Panc1 (cell line): ENCODE measurements at regions of chr4 and their contacts with region 1.

Region 1: DNA sequence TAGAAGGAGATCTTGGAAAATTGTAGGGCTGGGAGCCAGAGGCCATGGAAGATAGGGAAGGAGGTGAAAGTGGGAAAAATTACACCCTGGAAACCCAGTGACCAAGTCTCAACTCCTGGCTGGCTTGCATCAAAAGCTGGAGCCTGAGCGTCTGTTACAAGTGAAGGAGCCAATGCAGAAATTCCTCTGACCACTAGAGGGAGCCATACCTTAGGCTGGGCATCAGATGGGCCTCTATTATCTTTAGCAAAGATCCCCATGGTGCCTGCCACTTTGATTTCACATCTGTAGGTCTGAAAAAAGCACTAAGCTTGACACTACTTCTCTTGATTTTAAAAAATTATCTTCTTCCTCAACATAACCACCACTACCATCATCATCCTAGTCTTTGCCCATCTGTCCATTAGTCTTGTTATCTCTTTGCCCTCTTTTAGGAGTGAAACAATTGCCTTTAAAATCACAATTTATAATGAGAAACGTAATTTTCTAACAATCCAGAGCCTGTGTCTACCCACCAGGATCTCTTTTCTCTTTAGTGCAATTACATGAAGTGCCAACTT is 62.9 kb downstream of the ANAPC4 start:
- DNase-seq: peak; percentile 45
- ATAC-seq: peak; percentile 83
- H3K4me3 ChIP-seq: no peak overlapping the region
- H3K27ac ChIP-seq: no peak overlapping the region
- H3K4me1 ChIP-seq: no peaks in the 10 kb centered on the region
- H3K27me3 ChIP-seq: no peaks in the 10 kb centered on the region
- CTCF ChIP-seq: peak; percentile 88

Region 2: GRCh38 chr4:25767877-25768725 is 328.1 kb after region 1 on chr4:
- CTCF ChIA-PET with region 1: interaction called, 8 read pairs
- POLR2A ChIA-PET with region 1: no interaction called
- in situ Hi-C with region 1: no loop called
- intact Hi-C with region 1: loop called (anchors 1 kb)
- DNase-seq: peak; percentile 54
- ATAC-seq: peak; percentile 92
- H3K4me3 ChIP-seq: no peak overlapping the region
- H3K27ac ChIP-seq: no peak overlapping the region
- H3K4me1 ChIP-seq: no peaks in the 10 kb centered on the region
- H3K27me3 ChIP-seq: no peaks in the 10 kb centered on the region
- CTCF ChIP-seq: peak; percentile 87

Region 3: DNA sequence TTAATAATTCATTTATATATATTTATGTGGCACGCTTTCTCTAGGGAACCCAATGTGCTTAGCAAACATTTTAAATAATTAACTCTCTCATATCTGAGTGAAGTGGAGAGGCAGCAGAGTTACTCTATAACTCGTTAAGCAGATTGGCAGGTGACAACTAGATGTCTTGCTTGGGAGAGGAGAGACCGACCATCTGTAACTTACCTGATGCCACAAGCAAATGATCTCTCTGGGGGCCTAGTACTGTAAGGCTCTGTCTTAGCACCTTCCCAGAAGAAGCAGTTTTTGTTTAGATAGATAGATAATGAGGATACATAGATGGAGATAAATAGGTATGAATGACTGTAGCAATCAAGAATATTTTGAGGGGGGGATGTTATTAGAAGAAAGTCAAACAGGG is 434.7 kb after region 1 on chr4:
- CTCF ChIA-PET with region 1: no interaction called
- POLR2A ChIA-PET with region 1: no interaction called
- in situ Hi-C with region 1: no loop called
- intact Hi-C with region 1: loop called (anchors 5 kb)
- DNase-seq: no peak
- ATAC-seq: no peak
- H3K4me3 ChIP-seq: no peak overlapping the region
- H3K27ac ChIP-seq: no peak overlapping the region
- H3K4me1 ChIP-seq: no peaks in the 10 kb centered on the region
- H3K27me3 ChIP-seq: no peaks in the 10 kb centered on the region
- CTCF ChIP-seq: no peak